WTC11 (cell line): ENCODE measurements at regions of chr5 and their contacts with region 1.

Region 1: DNA sequence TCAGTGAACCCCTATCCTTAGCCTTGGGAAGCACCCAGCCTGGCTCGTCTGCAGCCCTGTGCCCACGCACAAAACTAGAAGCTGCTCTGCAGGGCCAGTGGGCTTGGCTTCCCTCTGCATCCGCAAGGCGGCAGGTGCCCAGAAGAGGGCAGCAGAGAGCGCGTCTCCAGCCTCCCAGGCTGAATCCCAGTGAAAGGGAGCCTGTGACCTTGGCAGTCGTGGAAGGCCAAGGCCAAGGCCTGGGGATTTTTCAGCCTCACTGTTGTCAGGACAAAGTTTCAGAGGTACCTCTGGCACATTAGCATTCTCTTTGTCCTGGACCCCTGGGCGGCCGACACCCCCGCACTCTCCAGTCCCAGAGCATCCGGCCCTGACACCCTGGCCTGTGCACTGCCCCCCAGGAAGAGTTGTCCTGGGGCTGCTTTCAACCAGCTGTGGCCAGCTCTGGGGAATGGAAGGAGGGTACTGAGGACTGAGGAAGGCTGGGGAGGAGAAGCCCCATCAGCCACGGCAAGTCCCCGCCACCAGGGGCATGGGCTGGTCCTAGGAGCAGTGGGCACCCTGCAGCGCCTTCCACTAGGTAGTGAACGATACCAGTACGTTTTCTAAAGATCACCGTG is 63.6 kb upstream of the IL17B start:
- DNase-seq: peak; percentile 95
- ATAC-seq: peak; percentile 79
- H3K4me3 Mint-ChIP-seq: no peak overlapping the region
- H3K27ac Mint-ChIP-seq: peak overlapping the region; percentile 98
- H3K4me1 Mint-ChIP-seq: peaks cover 38% of the 10 kb centered on the region
- H3K27me3 Mint-ChIP-seq: no peaks in the 10 kb centered on the region
- CTCF ChIP-seq: peak; percentile 77

Region 2: DNA sequence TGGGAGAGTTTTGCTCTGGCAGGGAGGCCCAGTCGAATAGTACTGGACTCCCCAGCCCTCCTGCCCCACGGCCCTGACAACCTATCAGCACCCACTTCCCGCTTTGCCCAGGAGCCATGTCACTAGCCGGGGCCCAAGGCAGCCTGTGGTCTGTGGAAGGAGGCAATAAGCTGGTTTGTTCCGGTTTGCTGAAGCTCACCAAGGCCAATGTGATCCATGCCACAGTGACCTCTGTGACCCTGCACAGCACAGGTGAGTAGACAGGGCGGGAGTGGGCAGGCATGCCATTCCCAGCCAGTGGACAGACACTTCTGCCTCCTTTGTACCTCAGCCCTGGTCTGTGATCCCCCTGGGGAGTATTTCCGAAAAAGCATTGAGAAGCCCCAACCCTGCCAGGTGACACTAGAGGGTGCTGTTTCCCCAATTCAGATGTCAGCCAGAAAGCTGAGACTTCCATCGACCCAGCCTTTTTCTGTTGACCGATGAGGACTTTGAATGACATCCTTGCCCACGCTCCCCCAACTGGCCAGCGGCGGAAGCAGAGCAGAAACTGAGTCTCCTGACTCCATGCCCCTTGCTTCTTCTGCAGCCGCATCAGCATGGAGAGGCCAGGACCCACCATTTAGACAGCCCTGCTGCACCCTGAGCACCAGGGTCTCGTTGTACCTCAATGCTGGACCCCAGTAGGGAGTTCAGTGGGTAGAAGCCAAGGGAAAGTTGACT is 75.3 kb before region 1 on chr5:
- CTCF ChIA-PET with region 1: interaction called, 22 read pairs
- POLR2A ChIA-PET with region 1: no interaction called
- DNase-seq: peak; percentile 87
- ATAC-seq: peak; percentile 85
- H3K4me3 Mint-ChIP-seq: no peak overlapping the region
- H3K27ac Mint-ChIP-seq: no peak overlapping the region
- H3K4me1 Mint-ChIP-seq: peaks cover 15% of the 10 kb centered on the region
- H3K27me3 Mint-ChIP-seq: no peaks in the 10 kb centered on the region
- CTCF ChIP-seq: peak; percentile 65; the same call in 1 of the 2 replicates

Region 3: GRCh38 chr5:149422366-149423048 is 20.2 kb before region 1 on chr5:
- CTCF ChIA-PET with region 1: interaction called, 10 read pairs
- POLR2A ChIA-PET with region 1: no interaction called
- DNase-seq: peak; percentile 49
- ATAC-seq: peak; percentile 43
- H3K4me3 Mint-ChIP-seq: no peak overlapping the region
- H3K27ac Mint-ChIP-seq: no peak overlapping the region
- H3K4me1 Mint-ChIP-seq: peaks cover 46% of the 10 kb centered on the region
- H3K27me3 Mint-ChIP-seq: no peaks in the 10 kb centered on the region
- CTCF ChIP-seq: no peak

Region 4: DNA sequence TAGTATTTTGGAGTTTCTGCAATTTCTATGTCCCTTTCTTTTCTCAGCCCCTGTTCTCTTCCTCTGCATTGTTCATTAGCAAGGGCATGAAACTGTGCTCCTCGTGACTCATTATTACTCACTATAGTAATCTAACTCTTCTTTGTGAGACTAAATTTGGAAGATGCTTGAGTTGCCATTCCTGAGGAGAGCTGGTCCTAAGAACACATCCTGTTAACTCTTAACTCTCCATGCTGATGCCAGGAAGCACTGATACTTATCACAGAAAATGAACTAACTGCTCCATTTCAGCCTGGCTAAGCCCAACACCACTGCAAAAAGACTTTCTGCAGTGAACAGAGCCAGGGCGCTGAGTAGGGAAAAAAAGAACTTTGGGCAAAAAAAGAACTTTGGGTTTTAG is 119.2 kb after region 1 on chr5:
- CTCF ChIA-PET with region 1: interaction called, 57 read pairs
- POLR2A ChIA-PET with region 1: no interaction called
- DNase-seq: no peak
- ATAC-seq: peak; percentile 58
- H3K4me3 Mint-ChIP-seq: no peak overlapping the region
- H3K27ac Mint-ChIP-seq: peak overlapping the region; percentile 94
- H3K4me1 Mint-ChIP-seq: peaks cover 38% of the 10 kb centered on the region
- H3K27me3 Mint-ChIP-seq: no peaks in the 10 kb centered on the region
- CTCF ChIP-seq: no peak

Region 5: DNA sequence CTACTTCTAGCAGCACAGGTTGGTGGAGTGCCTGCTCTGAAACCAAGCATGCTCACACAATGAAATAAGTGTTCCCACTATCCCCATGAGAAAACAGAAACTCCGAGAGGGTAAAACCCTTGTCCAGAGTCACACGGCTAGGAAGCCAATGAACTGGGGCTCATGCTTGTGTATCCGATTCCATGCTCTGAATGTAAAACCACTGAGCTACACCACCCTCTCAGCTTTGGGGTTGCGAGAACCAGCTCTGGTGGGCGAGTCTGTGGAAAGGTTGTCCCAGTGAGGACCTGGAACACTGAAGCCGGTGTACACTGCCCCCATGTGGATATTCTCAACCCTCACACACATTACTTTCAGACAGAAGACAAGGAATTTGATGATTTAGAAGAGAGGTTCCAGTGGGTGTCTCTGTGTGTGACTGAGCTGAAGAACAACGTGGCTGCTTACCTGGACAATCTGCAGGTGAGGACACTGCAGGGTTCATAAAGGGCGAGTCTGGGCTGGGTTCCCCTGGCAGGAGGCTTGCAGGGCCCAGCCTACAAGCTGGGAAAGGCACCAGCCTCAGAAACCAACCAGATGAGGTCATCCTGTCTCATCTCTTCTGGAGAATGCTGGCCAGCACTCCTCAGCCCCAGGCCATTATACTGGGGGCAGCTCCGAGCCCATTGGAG is 176.0 kb after region 1 on chr5:
- CTCF ChIA-PET with region 1: interaction called, 13 read pairs
- POLR2A ChIA-PET with region 1: no interaction called
- DNase-seq: peak; percentile 58
- ATAC-seq: peak; percentile 92
- H3K4me3 Mint-ChIP-seq: no peak overlapping the region
- H3K27ac Mint-ChIP-seq: no peak overlapping the region
- H3K4me1 Mint-ChIP-seq: peaks cover 10% of the 10 kb centered on the region
- H3K27me3 Mint-ChIP-seq: no peaks in the 10 kb centered on the region
- CTCF ChIP-seq: peak; percentile 64